Activated B cell treated with CpG ODN at 0.5 μM for 24 hours (primary cell): ENCODE measurements at regions of chr19 and their contacts with region 1.

Region 1: GRCh38 chr19:7636691-7637373 is at the start of gene STXBP2:
- DNase-seq: peak; percentile 93
- ATAC-seq: peak; percentile 98
- H3K4me3 Mint-ChIP-seq: peak within 1 kb of the TSS; percentile 86
- H3K27ac Mint-ChIP-seq: peak within 1 kb of the TSS; percentile 90
- H3K4me1 Mint-ChIP-seq: peaks cover 36% of the 10 kb centered on the region
- H3K27me3 Mint-ChIP-seq: no peaks in the 10 kb centered on the region
- CTCF ChIP-seq: no peak
- total RNA-seq, gene STXBP2: 147 and 176 TPM in 2 replicates

Region 2: GRCh38 chr19:7652061-7652641 is 15.3 kb after region 1 on chr19:
- CTCF ChIA-PET with region 1: interaction called, 4 read pairs
- POLR2A ChIA-PET with region 1: interaction called, 7 read pairs
- intact Hi-C with region 1: loop called (anchors 2 kb)
- DNase-seq: peak; percentile 82
- ATAC-seq: peak; percentile 87
- H3K4me3 Mint-ChIP-seq: peak overlapping the region; percentile 78
- H3K27ac Mint-ChIP-seq: peak overlapping the region; percentile 41
- H3K4me1 Mint-ChIP-seq: peaks cover 8% of the 10 kb centered on the region
- H3K27me3 Mint-ChIP-seq: no peaks in the 10 kb centered on the region
- CTCF ChIP-seq: peak; percentile 81

Region 3: GRCh38 chr19:8001995-8002849 is 365.4 kb after region 1 on chr19:
- CTCF ChIA-PET with region 1: no interaction called
- POLR2A ChIA-PET with region 1: no interaction called
- intact Hi-C with region 1: no loop called
- DNase-seq: peak; percentile 77
- ATAC-seq: peak; percentile 55
- H3K4me3 Mint-ChIP-seq: peak overlapping the region; percentile 80
- H3K27ac Mint-ChIP-seq: peak overlapping the region; percentile 57
- H3K4me1 Mint-ChIP-seq: peaks cover 60% of the 10 kb centered on the region
- H3K27me3 Mint-ChIP-seq: no peaks in the 10 kb centered on the region
- CTCF ChIP-seq: peak; percentile 94